A549 (cell line): ENCODE measurements at regions of chr1 and their contacts with region 1.

Region 1: GRCh38 chr1:86380257-86380861 is 15.8 kb downstream of the ODF2L start:
- DNase-seq: peak; percentile 16 to 74
- ATAC-seq: 0 out of 6 replicates have a peak, but pooled peaks of 1 of the 2 experiments have one; percentile 54
- H3K4me3 ChIP-seq: no peak overlapping the region
- H3K27ac ChIP-seq: no peak overlapping the region
- H3K4me1 ChIP-seq: no peaks in the 10 kb centered on the region
- CTCF ChIP-seq: peak; percentile 71
- EP300 ChIP-seq: no peak
- POLR2A ChIP-seq: no peak
- RAD21 ChIP-seq: peak; percentile 73 to 74

Region 2: DNA sequence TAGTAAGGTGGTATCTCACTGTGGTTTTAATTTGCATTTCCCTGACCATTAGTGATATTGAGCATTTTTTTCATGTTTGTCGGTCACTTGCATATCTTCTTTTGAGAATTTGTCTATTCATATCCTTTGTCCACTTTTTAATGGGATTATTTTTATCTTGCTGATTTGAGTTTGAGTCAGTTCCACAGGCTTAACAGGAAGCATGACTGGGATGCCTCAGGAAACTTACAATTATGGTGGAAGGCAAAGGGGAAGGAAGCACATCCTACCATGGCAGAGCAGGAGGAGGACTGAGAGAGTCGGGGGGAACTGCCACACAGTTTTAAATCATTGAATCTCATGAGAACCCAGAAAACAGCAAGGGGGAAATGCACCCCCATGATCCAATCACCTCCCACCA is 35.3 kb before region 1 on chr1:
- CTCF ChIA-PET with region 1: no interaction called
- POLR2A ChIA-PET with region 1: no interaction called
- DNase-seq: no peak
- ATAC-seq: no peak
- H3K4me3 ChIP-seq: no peak overlapping the region
- H3K27ac ChIP-seq: no peak overlapping the region
- H3K4me1 ChIP-seq: no peaks in the 10 kb centered on the region
- CTCF ChIP-seq: no peak
- EP300 ChIP-seq: no peak
- POLR2A ChIP-seq: no peak
- RAD21 ChIP-seq: no peak

Region 3: DNA sequence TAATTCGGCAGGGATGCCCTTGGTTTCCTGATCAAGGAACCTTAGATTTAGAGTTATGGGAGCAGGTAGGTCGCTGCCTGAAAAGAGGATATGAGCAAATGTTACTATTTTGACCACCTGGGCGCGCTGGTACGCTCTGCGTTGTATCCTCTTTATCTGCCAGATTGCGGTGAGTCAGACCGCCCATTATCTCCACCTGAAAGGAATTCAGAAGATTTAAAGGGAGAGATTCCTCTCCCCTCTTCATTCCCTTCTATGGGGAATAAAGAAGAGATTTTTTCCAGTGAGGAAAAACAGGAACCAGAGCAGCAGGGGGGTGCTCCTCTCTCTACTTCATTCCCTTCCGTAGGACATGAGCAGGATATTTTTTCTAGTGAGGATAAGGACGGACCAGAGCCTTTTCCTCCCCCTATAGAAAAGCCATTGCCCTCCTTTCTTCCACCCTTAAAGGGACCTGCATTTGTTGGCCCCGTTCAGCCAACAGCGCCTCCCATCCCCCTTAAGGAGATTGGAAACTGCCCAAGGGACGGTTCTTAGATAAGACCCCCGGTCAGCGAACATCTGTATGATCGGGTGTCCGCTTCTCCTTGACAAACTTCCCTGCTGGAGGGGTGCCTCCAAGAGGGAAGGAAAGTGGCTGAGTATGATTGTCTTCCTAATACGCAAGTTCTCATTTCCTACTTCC is 122.5 kb after region 1 on chr1:
- CTCF ChIA-PET with region 1: interaction called, 15 read pairs
- POLR2A ChIA-PET with region 1: no interaction called
- DNase-seq: no peak
- ATAC-seq: no peak
- H3K4me3 ChIP-seq: no peak overlapping the region
- H3K27ac ChIP-seq: no peak overlapping the region
- H3K4me1 ChIP-seq: no peaks in the 10 kb centered on the region
- CTCF ChIP-seq: no peak
- EP300 ChIP-seq: no peak
- POLR2A ChIP-seq: no peak
- RAD21 ChIP-seq: no peak